Thyroid gland (tissue), 4 donors: ENCODE measurements at regions of chr10 and their contacts with region 1.

Region 1: DNA sequence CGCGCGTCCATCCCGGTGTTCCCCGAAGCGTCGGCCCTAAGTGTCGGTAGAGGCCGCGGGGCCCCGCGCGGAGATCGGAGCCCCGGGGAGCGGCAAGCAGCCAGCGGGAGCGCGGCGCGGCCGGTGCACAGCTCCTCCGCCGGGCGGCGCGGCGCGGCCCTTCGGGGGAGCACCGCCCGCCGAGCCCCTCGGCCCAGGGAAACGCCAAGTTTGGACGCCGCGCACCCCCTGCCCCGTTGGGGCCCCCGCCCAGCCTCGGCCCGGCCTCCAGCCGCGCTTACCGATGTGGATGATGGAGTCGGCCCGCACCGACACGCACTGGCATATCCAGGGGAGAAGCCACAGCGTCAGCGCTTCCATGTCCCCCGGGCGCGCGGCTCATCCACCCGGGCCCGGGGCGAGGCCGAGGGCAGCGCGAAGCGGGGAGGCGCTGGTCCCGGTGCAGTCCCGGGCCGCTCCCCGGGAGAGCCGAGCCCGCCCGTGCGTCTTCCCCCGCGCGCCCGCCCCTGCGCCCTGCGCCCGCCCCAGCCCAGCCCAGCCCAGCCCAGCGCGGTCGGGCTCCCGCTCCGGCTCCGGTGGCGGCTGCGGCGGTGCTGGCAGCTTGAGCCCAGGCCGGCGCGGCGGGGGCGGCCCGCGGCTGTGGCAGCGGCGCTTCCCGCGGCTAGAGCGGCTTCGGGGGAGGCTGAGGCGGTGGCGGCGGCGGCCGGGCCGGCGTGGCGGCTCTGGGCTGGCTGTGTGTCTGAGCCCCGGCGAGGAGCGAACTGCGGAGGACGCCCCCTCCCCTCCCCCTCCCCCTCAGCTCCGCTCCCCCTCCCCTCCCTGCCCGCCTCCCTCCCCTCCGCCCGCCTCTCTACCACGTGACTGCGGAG is at the start of gene GRID1:
- DNase-seq: peak; percentile 64 to 67
- H3K4me3 ChIP-seq: peak within 1 kb of the TSS; percentile 48 to 65 (median 64)
- H3K27ac ChIP-seq: peak within 1 kb of the TSS in 1 of 3 donors; percentile 67
- H3K4me1 ChIP-seq: peaks cover 18 to 37% of the 10 kb centered on the region in 2 donors
- H3K27me3 ChIP-seq: no peaks in the 10 kb centered on the region
- CTCF ChIP-seq: peak in 3 of 6 experiments; percentile 3 to 27 (median 4)
- POLR2A ChIP-seq: peak in 1 of 2 donors; percentile 53
- total RNA-seq, gene GRID1: 17.2 to 28.1 (median 23.6) TPM

Region 2: GRCh38 chr10:85995791-85996190 is 370.5 kb before region 1 on chr10:
- intact Hi-C with region 1: loop called (anchors 10 kb)
- DNase-seq: peak; percentile 44 to 61
- H3K4me3 ChIP-seq: no peak overlapping the region
- H3K27ac ChIP-seq: no peak overlapping the region
- H3K4me1 ChIP-seq: peaks cover 0 to 5% of the 10 kb centered on the region in 2 donors
- H3K27me3 ChIP-seq: no peaks in the 10 kb centered on the region
- CTCF ChIP-seq: peak in 4 of 6 experiments; percentile 35 to 55 (median 49)
- POLR2A ChIP-seq: no peak

Region 3: DNA sequence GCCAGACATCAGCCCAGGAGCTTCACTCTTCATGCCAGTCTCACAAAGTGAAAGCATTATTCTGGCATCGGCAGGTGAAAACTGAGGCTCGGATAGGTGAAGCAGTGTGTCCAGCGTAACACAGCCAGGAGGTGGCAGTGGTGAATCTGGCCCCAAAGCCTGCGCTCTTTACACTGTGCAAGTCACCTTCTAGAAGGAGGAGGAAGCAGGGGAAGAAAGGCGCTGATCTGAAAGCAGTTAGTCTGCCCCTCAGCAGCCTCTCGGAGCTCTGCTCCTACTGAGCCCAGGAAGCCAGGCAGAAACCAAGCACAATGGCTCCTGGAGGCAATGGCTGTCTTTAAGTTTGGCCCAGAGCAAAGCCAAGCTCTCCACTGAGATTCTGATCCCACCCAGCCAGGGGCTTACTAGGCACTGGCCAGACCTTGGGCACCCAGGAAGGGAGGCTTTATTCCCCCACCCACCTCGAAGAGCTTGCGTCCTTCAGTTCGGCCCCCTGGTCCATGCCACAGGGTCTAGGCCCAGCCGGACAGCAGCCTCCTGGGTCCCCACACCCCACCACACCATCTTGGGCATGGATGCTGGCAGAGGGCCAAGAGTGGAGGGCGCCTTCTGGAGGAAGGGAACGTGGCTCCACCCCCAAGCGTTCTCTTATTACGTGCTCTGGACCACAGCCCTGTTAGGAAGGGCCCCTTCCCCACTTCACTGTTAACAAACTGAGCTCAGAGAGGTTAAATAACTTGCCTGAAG is 104.2 kb before region 1 on chr10:
- intact Hi-C with region 1: loop called (anchors 5 kb)
- DNase-seq: peak; percentile 78 to 82
- H3K4me3 ChIP-seq: no peak overlapping the region
- H3K27ac ChIP-seq: peak overlapping the region in 2 of 3 donors; percentile 44 to 80
- H3K4me1 ChIP-seq: peaks cover 23 to 37% of the 10 kb centered on the region in 2 donors
- H3K27me3 ChIP-seq: no peaks in the 10 kb centered on the region
- CTCF ChIP-seq: peak in 4 of 6 experiments; percentile 58 to 79 (median 70)
- POLR2A ChIP-seq: no peak

Region 4: GRCh38 chr10:86439544-86439943 is 73.3 kb after region 1 on chr10:
- intact Hi-C with region 1: no loop called
- DNase-seq: peak; percentile 71 to 73
- H3K4me3 ChIP-seq: no peak overlapping the region
- H3K27ac ChIP-seq: no peak overlapping the region
- H3K4me1 ChIP-seq: peaks cover 6 to 9% of the 10 kb centered on the region in 2 donors
- H3K27me3 ChIP-seq: no peaks in the 10 kb centered on the region
- CTCF ChIP-seq: no peak
- POLR2A ChIP-seq: no peak

Region 5: GRCh38 chr10:86512137-86512536 is 145.9 kb after region 1 on chr10:
- intact Hi-C with region 1: no loop called
- DNase-seq: no peak
- H3K4me3 ChIP-seq: no peak overlapping the region
- H3K27ac ChIP-seq: no peak overlapping the region
- H3K4me1 ChIP-seq: peaks cover 13 to 25% of the 10 kb centered on the region in 2 donors
- H3K27me3 ChIP-seq: no peaks in the 10 kb centered on the region
- CTCF ChIP-seq: no peak
- POLR2A ChIP-seq: no peak